CD4-positive, alpha-beta memory T cell (primary cell): ENCODE measurements at regions of chr20 and their contacts with region 1.

Region 1: DNA sequence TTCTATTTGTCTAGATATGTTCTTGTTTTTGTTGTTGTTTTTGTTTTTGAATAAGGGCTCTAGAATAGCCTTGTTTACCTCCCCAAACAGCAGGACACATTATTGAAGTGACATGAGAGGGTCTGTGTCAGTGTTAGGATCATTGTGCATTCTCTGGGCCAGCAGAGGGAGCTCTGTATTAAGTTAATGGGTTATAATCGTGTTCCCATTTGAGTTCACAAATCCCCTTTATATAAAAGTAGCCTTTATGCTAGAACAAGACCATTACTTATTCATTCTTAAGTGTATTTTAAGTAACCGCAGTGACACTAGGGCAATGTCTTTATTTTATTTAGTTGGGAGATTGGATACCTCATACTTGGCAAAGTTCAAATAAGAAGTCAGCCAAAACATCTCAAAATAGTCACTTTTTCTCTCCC is 44.8 kb downstream of the STK4 start:
- DNase-seq: peak; percentile 25 to 51 (median 40)
- H3K4me3 ChIP-seq: no peak overlapping the region
- H3K4me3 Mint-ChIP-seq: peak overlapping the region in 3 of 8 donors; percentile 17 to 54 (median 22)
- H3K27ac ChIP-seq: no peak overlapping the region
- H3K27ac Mint-ChIP-seq: peak overlapping the region in 3 of 7 donors; percentile 41 to 74 (median 57)
- H3K4me1 ChIP-seq: peaks cover 63% of the 10 kb centered on the region
- H3K4me1 Mint-ChIP-seq: peaks cover 47 to 81% (median 63%) of the 10 kb centered on the region in 4 donors
- H3K27me3 ChIP-seq: no peaks in the 10 kb centered on the region
- H3K27me3 Mint-ChIP-seq: no peaks in the 10 kb centered on the region

Region 2: GRCh38 chr20:44800398-44801046 is 210.6 kb before region 1 on chr20:
- CTCF ChIA-PET with region 1: no interaction called
- POLR2A ChIA-PET with region 1: no interaction called
- intact Hi-C with region 1: no loop called
- DNase-seq: no peak
- H3K4me3 ChIP-seq: no peak overlapping the region
- H3K4me3 Mint-ChIP-seq: no peak overlapping the region
- H3K27ac ChIP-seq: no peak overlapping the region
- H3K27ac Mint-ChIP-seq: no peak overlapping the region
- H3K4me1 ChIP-seq: no peaks in the 10 kb centered on the region
- H3K4me1 Mint-ChIP-seq: no peaks in the 10 kb centered on the region
- H3K27me3 ChIP-seq: peaks cover under 1% of the 10 kb centered on the region
- H3K27me3 Mint-ChIP-seq: peaks cover 5 to 14% of the 10 kb centered on the region in 2 donors

Region 3: GRCh38 chr20:44909872-44910689 is 101.0 kb before region 1 on chr20 and contains the start of gene PABPC1L:
- CTCF ChIA-PET with region 1: interaction called, 3 read pairs
- POLR2A ChIA-PET with region 1: no interaction called
- intact Hi-C with region 1: loop called (anchors 5 kb)
- DNase-seq: peak; percentile 68 to 83 (median 71)
- H3K4me3 ChIP-seq: peak within 1 kb of the TSS; percentile 42 to 61
- H3K4me3 Mint-ChIP-seq: peak within 1 kb of the TSS; percentile 82 to 92 (median 86)
- H3K27ac ChIP-seq: peak within 1 kb of the TSS; percentile 40
- H3K27ac Mint-ChIP-seq: peak within 1 kb of the TSS; percentile 29 to 86 (median 74)
- H3K4me1 ChIP-seq: peaks cover 19% of the 10 kb centered on the region
- H3K4me1 Mint-ChIP-seq: peaks cover 14 to 45% (median 30%) of the 10 kb centered on the region in 4 donors
- H3K27me3 ChIP-seq: no peaks in the 10 kb centered on the region
- H3K27me3 Mint-ChIP-seq: no peaks in the 10 kb centered on the region
- total RNA-seq, gene PABPC1L: 46.5 to 50.0 TPM

Region 4: GRCh38 chr20:44942264-44942973 is 68.7 kb before region 1 on chr20:
- CTCF ChIA-PET with region 1: no interaction called
- POLR2A ChIA-PET with region 1: no interaction called
- intact Hi-C with region 1: no loop called
- DNase-seq: no peak
- H3K4me3 ChIP-seq: no peak overlapping the region
- H3K4me3 Mint-ChIP-seq: no peak overlapping the region
- H3K27ac ChIP-seq: no peak overlapping the region
- H3K27ac Mint-ChIP-seq: peak overlapping the region in 3 of 7 donors; percentile 47 to 72 (median 70)
- H3K4me1 ChIP-seq: no peaks in the 10 kb centered on the region
- H3K4me1 Mint-ChIP-seq: peaks cover 0 to 5% (median 3%) of the 10 kb centered on the region in 4 donors
- H3K27me3 ChIP-seq: no peaks in the 10 kb centered on the region
- H3K27me3 Mint-ChIP-seq: no peaks in the 10 kb centered on the region

Region 5: GRCh38 chr20:44960103-44960852 is 50.8 kb before region 1 on chr20 and contains the start of gene TOMM34:
- CTCF ChIA-PET with region 1: interaction called, 10 read pairs
- POLR2A ChIA-PET with region 1: interaction called, 4 read pairs
- intact Hi-C with region 1: no loop called
- DNase-seq: peak; percentile 89 to 91 (median 90)
- H3K4me3 ChIP-seq: peak within 1 kb of the TSS; percentile 54 to 67
- H3K4me3 Mint-ChIP-seq: peak within 1 kb of the TSS; percentile 94 to 100 (median 98)
- H3K27ac ChIP-seq: peak within 1 kb of the TSS; percentile 66
- H3K27ac Mint-ChIP-seq: peak within 1 kb of the TSS; percentile 84 to 99 (median 96)
- H3K4me1 ChIP-seq: peaks cover 34% of the 10 kb centered on the region
- H3K4me1 Mint-ChIP-seq: peaks cover 35 to 51% (median 38%) of the 10 kb centered on the region in 4 donors
- H3K27me3 ChIP-seq: no peaks in the 10 kb centered on the region
- H3K27me3 Mint-ChIP-seq: no peaks in the 10 kb centered on the region
- total RNA-seq, gene TOMM34: 7.6 to 8.5 TPM

Region 6: GRCh38 chr20:44997171-44998067 is 13.7 kb before region 1 on chr20:
- CTCF ChIA-PET with region 1: interaction called, 29 read pairs
- POLR2A ChIA-PET with region 1: interaction called, 4 read pairs
- intact Hi-C with region 1: no loop called
- DNase-seq: no peak
- H3K4me3 ChIP-seq: no peak overlapping the region
- H3K4me3 Mint-ChIP-seq: peak overlapping the region in 2 of 8 donors; percentile 17 to 39
- H3K27ac ChIP-seq: no peak overlapping the region
- H3K27ac Mint-ChIP-seq: peak overlapping the region; percentile 11 to 90 (median 61)
- H3K4me1 ChIP-seq: peaks cover 60% of the 10 kb centered on the region
- H3K4me1 Mint-ChIP-seq: peaks cover 42 to 82% (median 62%) of the 10 kb centered on the region in 4 donors
- H3K27me3 ChIP-seq: no peaks in the 10 kb centered on the region
- H3K27me3 Mint-ChIP-seq: no peaks in the 10 kb centered on the region

Region 7: DNA sequence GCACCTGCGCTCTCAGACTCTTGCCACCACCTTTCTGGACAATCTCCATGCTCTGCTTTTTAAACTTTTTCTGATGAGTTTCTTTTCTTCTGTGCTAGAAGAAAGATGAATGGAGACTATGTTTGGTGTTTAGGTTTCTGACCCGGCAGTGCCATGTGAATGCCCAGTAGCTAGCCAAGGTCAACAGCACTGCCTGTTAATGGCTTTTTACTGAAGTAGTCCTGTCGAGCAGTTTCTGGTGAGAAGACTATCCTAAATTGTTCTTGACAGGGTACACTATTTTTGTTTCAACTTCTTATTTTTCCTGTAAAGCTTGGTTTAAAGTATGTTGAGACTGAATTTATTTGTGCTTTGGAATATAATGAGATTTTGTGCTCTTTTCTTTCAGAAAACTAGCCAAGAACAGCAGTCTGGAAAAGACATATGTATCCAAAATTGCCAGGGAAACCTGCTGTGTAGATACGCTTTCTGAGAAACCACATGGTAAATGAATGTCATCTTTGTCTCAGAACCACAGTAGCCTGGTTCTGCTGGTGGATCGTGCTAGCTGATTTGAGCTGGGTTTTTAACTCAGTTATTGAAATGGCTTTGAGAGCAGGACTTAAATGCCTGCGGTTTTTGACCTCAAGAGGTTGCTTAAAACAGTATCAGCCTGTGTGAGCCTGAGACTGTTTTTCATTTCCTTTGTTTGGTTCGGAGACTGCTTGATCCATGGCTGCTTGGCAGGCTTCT is 41.7 kb after region 1 on chr20:
- CTCF ChIA-PET with region 1: interaction called, 5 read pairs
- POLR2A ChIA-PET with region 1: interaction called, 3 read pairs
- intact Hi-C with region 1: loop called (anchors 5 kb)
- DNase-seq: peak; percentile 15 to 34 (median 21)
- H3K4me3 ChIP-seq: no peak overlapping the region
- H3K4me3 Mint-ChIP-seq: peak overlapping the region in 7 of 8 donors; percentile 6 to 63 (median 31)
- H3K27ac ChIP-seq: peak overlapping the region; percentile 5
- H3K27ac Mint-ChIP-seq: peak overlapping the region; percentile 24 to 84 (median 68)
- H3K4me1 ChIP-seq: peaks cover 86% of the 10 kb centered on the region
- H3K4me1 Mint-ChIP-seq: peaks cover 62 to 89% (median 78%) of the 10 kb centered on the region in 4 donors
- H3K27me3 ChIP-seq: no peaks in the 10 kb centered on the region
- H3K27me3 Mint-ChIP-seq: no peaks in the 10 kb centered on the region

Region 8: DNA sequence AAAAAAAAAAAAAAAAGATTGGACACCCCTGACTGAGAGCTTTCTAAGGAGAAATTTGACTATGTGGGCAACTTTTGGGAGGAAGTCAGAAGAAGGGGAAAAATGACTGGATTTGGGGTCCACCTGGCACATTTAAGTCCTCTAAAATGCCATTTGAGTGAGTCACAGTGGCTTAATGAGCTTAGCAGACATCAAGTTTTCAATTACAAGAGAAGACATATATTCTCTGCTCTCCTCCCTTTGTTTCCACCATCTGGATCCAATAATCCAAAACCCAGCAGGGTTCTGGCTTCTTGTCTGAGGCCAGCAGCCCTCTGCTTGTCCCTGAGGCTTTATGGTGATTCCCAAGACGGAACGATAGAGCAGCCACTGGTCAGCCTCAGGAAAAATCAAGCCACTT is 170.5 kb after region 1 on chr20:
- CTCF ChIA-PET with region 1: no interaction called
- POLR2A ChIA-PET with region 1: no interaction called
- intact Hi-C with region 1: no loop called
- DNase-seq: no peak
- H3K4me3 ChIP-seq: no peak overlapping the region
- H3K4me3 Mint-ChIP-seq: no peak overlapping the region
- H3K27ac ChIP-seq: no peak overlapping the region
- H3K27ac Mint-ChIP-seq: no peak overlapping the region
- H3K4me1 ChIP-seq: no peaks in the 10 kb centered on the region
- H3K4me1 Mint-ChIP-seq: no peaks in the 10 kb centered on the region
- H3K27me3 ChIP-seq: no peaks in the 10 kb centered on the region
- H3K27me3 Mint-ChIP-seq: peaks cover 3 to 13% of the 10 kb centered on the region in 2 donors

Region 9: DNA sequence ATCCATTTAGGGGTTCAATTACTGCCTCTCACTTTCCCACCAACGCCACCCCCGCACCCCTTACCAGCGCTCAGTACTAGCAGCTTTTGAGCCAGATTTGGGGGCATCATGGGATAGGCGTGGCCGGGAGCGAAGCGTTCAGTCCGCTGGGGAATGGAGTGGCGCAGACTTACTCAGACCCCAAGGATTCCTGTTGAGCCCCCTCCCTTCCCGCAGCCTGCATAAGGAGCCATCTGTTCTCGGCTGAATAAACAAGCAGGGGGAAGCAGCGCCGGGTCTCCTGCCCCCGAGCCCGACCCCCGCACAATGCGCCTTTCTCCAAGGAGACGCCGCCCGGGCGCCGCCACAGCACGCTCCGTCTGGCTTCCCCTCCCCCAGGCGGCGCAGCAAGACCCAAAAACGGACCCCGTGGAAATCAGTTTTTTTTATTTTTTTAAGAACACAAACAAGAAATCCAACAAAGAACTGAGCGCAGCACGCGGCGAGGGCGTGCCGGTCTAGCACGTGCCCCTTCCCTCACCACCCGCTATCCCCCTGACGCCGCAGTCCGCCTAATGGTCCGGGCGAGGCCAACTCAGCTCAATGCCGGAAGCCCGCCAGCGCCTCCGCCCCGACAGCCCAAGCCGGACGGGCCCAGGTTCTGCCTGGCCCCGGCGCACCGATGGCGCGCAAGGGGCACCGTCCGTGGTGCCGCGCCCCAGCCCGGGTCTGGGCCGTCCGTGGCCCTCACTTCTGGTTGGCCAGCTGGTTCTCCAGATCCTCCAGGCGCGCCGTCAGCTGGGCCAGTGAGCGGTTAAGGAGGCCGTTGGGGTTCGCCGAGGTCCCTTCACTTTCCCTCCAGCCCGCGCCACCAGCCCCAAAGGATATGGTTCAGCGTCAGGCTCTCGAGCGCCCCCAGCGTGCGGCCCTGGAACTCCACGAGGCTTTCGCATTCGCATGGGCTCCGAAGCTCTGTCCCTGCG is 282.2 kb after region 1 on chr20:
- CTCF ChIA-PET with region 1: interaction called, 3 read pairs
- POLR2A ChIA-PET with region 1: no interaction called
- intact Hi-C with region 1: loop called (anchors 2 kb)
- DNase-seq: peak; percentile 70 to 77 (median 71)
- H3K4me3 ChIP-seq: peak overlapping the region; percentile 40 to 64
- H3K4me3 Mint-ChIP-seq: peak overlapping the region; percentile 68 to 84 (median 79)
- H3K27ac ChIP-seq: no peak overlapping the region
- H3K27ac Mint-ChIP-seq: no peak overlapping the region
- H3K4me1 ChIP-seq: peaks cover 11% of the 10 kb centered on the region
- H3K4me1 Mint-ChIP-seq: peaks cover 2 to 8% (median 4%) of the 10 kb centered on the region in 4 donors
- H3K27me3 ChIP-seq: no peaks in the 10 kb centered on the region
- H3K27me3 Mint-ChIP-seq: peaks cover 9 to 30% of the 10 kb centered on the region in 2 donors